Activated CD4-positive, alpha-beta T cell treated with anti-CD3 and anti-CD28 coated beads for 36 hours (primary cell): ENCODE measurements at regions of chrX and their contacts with region 1.

Region 1: GRCh38 chrX:15674841-15675489 is 10.4 kb upstream of the CLTRN start:
- DNase-seq: peak; percentile 92
- ATAC-seq: peak; percentile 79
- H3K4me3 Mint-ChIP-seq: no peak overlapping the region
- H3K27ac Mint-ChIP-seq: no peak overlapping the region
- H3K4me1 Mint-ChIP-seq: peaks cover 25% of the 10 kb centered on the region
- H3K27me3 Mint-ChIP-seq: no peaks in the 10 kb centered on the region

Region 2: DNA sequence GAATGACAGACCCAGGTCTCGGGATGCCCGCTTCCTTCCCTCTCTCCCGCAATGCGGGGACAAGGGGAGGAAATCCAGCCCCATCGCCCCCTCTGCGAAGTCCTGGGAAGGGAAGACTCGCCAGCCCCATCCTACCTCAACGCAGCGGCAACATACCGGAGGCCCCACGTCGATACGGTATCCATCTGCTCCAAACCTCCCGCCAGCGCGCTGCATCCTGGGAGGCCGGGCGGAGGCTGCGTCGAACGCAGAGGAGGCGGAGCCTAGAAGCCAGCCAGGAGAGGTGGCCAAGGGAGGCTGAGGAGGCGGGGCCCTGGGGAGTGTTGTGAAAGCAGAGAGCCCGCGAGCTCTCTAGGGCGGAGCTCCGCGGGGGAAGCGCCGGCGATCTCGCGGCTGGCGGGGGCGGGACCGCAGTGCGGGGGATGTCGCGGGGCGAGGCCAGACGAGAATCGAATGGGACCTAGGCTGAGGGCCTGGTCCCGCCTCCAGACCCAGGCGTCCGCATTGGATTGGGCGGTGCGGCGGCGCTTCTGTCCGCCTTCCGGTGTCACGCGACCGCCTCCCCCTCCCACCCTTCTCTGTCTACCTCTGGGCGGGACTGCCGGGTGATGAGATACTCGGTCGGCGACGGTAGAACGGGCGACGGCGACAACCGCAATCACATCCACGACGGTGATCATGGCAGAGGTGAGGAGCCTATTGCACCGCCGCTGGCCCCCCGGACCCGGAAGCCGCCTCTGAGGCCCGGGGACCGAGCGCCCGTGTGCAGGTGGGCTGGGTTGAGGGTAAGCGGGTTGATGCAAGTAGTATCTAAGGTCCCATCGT is 801.9 kb before region 1 on chrX and contains the starts of genes FANCB and MOSPD2:
- CTCF ChIA-PET with region 1: no interaction called
- POLR2A ChIA-PET with region 1: no interaction called
- intact Hi-C with region 1: loop called in 1 of 2 experiments (anchors 1 kb)
- DNase-seq: peak; percentile 95
- ATAC-seq: peak; percentile 96
- H3K4me3 Mint-ChIP-seq: peak within 1 kb of the TSS; percentile 78
- H3K27ac Mint-ChIP-seq: peak within 1 kb of the TSS; percentile 76
- H3K4me1 Mint-ChIP-seq: peaks cover 17% of the 10 kb centered on the region
- H3K27me3 Mint-ChIP-seq: no peaks in the 10 kb centered on the region
- total RNA-seq, gene FANCB: 14.7 to 15.4 TPM
- total RNA-seq, gene MOSPD2: 18.9 to 24.5 TPM

Region 3: GRCh38 chrX:15493118-15493962 is 181.6 kb before region 1 on chrX and contains the start of gene PIR:
- CTCF ChIA-PET with region 1: interaction called, 3 read pairs
- POLR2A ChIA-PET with region 1: no interaction called
- intact Hi-C with region 1: loop called (anchors 5 to 10 kb)
- DNase-seq: peak; percentile 77
- ATAC-seq: peak; percentile 95
- H3K4me3 Mint-ChIP-seq: peak within 1 kb of the TSS; percentile 75
- H3K27ac Mint-ChIP-seq: peak within 1 kb of the TSS; percentile 47
- H3K4me1 Mint-ChIP-seq: peaks cover 4% of the 10 kb centered on the region
- H3K27me3 Mint-ChIP-seq: peaks cover 2% of the 10 kb centered on the region
- total RNA-seq, gene PIR: 1.4 to 2.3 TPM

Region 4: DNA sequence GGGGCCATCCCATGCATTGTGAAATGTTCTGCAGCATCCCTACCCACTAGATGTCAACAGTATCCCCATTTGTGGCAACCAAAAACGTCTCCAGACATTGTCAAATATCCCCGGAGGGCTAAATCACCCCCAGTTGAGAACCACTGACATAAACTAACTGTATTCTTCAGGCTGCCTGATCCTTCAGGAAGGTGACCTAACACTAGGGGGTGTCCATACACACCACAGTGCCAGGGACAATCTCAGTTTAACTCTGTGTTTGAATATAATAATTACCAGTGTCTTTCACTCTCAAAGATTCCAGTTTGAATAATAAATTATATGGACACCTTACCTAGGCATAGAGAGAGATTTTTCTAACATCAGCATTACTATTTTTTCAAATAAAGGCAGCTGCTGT is 80.6 kb before region 1 on chrX:
- CTCF ChIA-PET with region 1: no interaction called
- POLR2A ChIA-PET with region 1: no interaction called
- intact Hi-C with region 1: no loop called
- DNase-seq: no peak
- ATAC-seq: no peak
- H3K4me3 Mint-ChIP-seq: no peak overlapping the region
- H3K27ac Mint-ChIP-seq: no peak overlapping the region
- H3K4me1 Mint-ChIP-seq: no peaks in the 10 kb centered on the region
- H3K27me3 Mint-ChIP-seq: no peaks in the 10 kb centered on the region

Region 5: GRCh38 chrX:15749642-15750610 is 75.0 kb after region 1 on chrX:
- CTCF ChIA-PET with region 1: no interaction called
- POLR2A ChIA-PET with region 1: no interaction called
- intact Hi-C with region 1: loop called in 1 of 2 experiments (anchors 5 kb)
- DNase-seq: peak; percentile 31
- ATAC-seq: peak; percentile 72
- H3K4me3 Mint-ChIP-seq: peak overlapping the region; percentile 49
- H3K27ac Mint-ChIP-seq: peak overlapping the region; percentile 90
- H3K4me1 Mint-ChIP-seq: peaks cover 72% of the 10 kb centered on the region
- H3K27me3 Mint-ChIP-seq: no peaks in the 10 kb centered on the region

Region 6: DNA sequence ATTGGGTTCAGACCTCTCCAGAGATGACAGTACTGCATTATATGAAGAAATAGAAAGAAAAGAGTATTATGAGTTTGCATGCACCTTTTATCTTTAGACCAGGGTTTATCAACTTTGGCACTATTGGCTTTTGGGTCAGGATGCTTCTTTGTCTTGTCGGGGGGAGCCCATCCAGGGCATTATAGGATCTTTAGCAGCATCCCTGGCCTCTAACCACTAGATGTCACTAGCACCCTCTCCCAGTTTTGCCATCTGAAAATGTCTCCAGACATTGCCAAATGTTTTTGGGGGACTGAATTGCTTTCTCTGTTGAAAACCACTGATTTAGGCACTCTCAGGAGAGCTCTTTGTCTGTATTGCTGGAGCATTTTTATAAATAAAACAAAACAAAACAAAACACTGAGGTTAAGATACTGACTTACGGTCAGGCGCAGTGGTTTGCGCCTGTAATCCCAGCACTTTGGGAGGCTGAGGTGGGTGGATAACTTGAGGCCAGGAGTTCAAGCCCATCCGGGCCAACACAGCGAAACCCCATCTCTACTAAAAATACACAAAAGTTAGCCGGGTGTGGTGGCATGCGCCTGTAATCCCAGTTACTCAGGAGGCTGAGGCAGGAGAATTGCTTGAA is 86.7 kb after region 1 on chrX:
- CTCF ChIA-PET with region 1: no interaction called
- POLR2A ChIA-PET with region 1: no interaction called
- intact Hi-C with region 1: no loop called
- DNase-seq: peak; percentile 49
- ATAC-seq: peak; percentile 80
- H3K4me3 Mint-ChIP-seq: no peak overlapping the region
- H3K27ac Mint-ChIP-seq: peak overlapping the region; percentile 70
- H3K4me1 Mint-ChIP-seq: peaks cover 38% of the 10 kb centered on the region
- H3K27me3 Mint-ChIP-seq: no peaks in the 10 kb centered on the region

Region 7: GRCh38 chrX:15838017-15838416 is 163.1 kb after region 1 on chrX:
- CTCF ChIA-PET with region 1: no interaction called
- POLR2A ChIA-PET with region 1: no interaction called
- intact Hi-C with region 1: no loop called
- DNase-seq: peak; percentile 23
- ATAC-seq: no peak
- H3K4me3 Mint-ChIP-seq: no peak overlapping the region
- H3K27ac Mint-ChIP-seq: no peak overlapping the region
- H3K4me1 Mint-ChIP-seq: peaks cover 4% of the 10 kb centered on the region
- H3K27me3 Mint-ChIP-seq: no peaks in the 10 kb centered on the region

Region 8: DNA sequence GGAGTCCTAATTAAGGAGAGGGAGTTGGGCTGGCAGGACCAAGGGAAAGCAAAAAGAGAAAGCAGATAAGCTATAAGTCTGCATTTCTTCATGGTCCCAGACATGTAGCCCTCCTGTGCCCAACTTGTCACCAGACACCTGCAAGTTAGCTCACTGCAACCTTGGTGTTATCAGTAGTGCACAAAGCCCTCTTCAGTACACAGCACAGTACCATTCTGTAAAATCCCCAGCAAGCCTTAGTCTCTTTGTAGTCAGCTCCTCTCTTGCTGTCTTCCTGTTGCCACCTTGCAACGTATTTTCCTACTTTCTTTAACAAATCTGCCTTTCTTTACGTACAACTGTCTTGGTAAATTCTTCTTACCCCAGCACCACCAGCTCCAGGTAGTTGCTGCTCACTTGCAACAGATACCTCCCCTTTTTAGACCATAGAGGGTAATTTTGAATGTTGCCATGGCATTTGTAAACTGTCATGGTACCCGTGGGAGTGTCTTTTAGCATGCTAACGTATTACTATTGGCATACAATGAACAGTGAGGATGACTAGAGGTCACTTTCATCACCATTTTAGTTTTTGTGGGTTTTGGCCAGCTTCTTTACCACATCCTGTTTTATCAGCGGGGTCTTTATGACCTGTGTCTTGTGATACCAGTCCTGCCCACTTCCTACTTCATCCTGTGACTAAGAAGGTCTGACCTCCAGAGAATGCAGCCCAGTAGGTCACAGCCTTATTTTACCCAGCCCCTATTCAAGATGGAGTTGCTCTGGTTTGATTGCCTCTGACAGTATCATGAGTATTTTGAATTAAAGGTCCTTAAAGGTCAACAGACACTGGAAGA is 208.0 kb after region 1 on chrX:
- CTCF ChIA-PET with region 1: no interaction called
- POLR2A ChIA-PET with region 1: no interaction called
- intact Hi-C with region 1: no loop called
- DNase-seq: no peak
- ATAC-seq: peak; percentile 36
- H3K4me3 Mint-ChIP-seq: no peak overlapping the region
- H3K27ac Mint-ChIP-seq: no peak overlapping the region
- H3K4me1 Mint-ChIP-seq: peaks cover 15% of the 10 kb centered on the region
- H3K27me3 Mint-ChIP-seq: no peaks in the 10 kb centered on the region

Region 9: DNA sequence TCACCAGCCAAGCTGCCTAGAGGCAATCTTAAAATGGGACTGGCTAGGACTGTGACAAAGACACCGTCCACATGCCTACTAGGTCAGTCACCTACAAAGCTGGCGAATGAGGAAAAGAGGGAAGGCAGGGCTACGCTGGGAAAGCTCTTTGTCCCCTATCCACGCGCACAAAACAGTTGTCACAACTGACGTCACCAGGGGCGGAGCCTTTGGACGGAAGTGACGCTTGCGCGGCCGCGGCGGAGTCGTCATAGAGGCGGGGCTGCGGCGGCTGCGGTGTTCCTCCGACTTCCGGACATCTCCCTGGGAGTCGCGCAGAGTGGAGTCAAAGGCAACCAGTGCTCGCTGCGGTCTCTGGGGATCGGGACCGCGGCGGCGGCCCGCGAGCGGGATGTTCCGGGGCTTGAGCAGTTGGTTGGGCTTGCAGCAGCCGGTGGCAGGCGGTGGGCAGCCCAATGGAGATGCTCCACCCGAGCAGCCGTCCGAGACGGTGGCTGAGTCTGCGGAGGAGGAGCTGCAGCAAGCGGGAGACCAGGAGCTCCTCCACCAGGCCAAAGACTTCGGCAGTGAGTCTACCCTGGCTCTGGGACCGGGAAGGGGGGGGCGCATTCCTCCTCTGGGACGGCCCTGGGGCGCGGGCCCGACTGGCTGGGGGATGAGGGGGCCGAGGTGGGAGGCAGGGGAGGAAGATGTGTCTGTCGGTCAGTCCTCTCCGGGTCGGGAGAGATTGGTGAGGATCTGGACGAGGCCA is 1044.5 kb after region 1 on chrX and contains the start of gene SYAP1:
- CTCF ChIA-PET with region 1: no interaction called
- POLR2A ChIA-PET with region 1: no interaction called
- intact Hi-C with region 1: loop called (anchors 1 to 10 kb)
- DNase-seq: peak; percentile 94
- ATAC-seq: peak; percentile 96
- H3K4me3 Mint-ChIP-seq: peak within 1 kb of the TSS; percentile 74
- H3K27ac Mint-ChIP-seq: peak within 1 kb of the TSS; percentile 88
- H3K4me1 Mint-ChIP-seq: peaks cover 22% of the 10 kb centered on the region
- H3K27me3 Mint-ChIP-seq: no peaks in the 10 kb centered on the region
- total RNA-seq, gene SYAP1: 22.8 to 31.4 TPM